Tibial artery (tissue), 4 donors: ENCODE measurements at regions of chr13 and their contacts with region 1.

Region 1: GRCh38 chr13:39616087-39616694 is 13.2 kb upstream of the LHFPL6 start:
- DNase-seq: peak in 1 of 2 donors; percentile 30
- H3K4me3 ChIP-seq: no peak overlapping the region
- H3K27ac ChIP-seq: no peak overlapping the region
- H3K4me1 ChIP-seq: no peaks in the 10 kb centered on the region
- H3K27me3 ChIP-seq: no peaks in the 10 kb centered on the region
- CTCF ChIP-seq: peak; percentile 80 to 94

Region 2: DNA sequence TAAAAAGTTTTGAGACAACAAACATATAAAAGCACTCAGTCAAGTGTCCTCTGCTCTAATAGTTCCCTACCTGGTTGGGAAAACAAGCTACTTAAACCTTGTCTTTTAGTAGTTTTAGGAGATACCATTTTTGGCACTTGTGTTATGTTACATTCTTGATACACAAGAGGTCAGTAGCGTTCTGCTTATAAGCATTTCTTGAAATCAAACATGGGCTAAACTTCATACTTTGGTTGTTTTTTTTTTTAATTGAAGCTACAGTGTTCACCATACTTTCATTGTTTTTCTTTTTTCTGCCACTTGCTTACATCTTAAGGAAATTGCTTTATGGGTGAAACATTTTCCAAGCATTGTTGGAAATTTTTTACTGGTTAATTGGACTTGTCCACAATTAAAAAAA is 565.0 kb before region 1 on chr13:
- intact Hi-C with region 1: loop called (anchors 5 kb)
- DNase-seq: no peak
- H3K4me3 ChIP-seq: no peak overlapping the region
- H3K27ac ChIP-seq: no peak overlapping the region
- H3K4me1 ChIP-seq: no peaks in the 10 kb centered on the region
- H3K27me3 ChIP-seq: no peaks in the 10 kb centered on the region
- CTCF ChIP-seq: peak; percentile 43 to 46

Region 3: DNA sequence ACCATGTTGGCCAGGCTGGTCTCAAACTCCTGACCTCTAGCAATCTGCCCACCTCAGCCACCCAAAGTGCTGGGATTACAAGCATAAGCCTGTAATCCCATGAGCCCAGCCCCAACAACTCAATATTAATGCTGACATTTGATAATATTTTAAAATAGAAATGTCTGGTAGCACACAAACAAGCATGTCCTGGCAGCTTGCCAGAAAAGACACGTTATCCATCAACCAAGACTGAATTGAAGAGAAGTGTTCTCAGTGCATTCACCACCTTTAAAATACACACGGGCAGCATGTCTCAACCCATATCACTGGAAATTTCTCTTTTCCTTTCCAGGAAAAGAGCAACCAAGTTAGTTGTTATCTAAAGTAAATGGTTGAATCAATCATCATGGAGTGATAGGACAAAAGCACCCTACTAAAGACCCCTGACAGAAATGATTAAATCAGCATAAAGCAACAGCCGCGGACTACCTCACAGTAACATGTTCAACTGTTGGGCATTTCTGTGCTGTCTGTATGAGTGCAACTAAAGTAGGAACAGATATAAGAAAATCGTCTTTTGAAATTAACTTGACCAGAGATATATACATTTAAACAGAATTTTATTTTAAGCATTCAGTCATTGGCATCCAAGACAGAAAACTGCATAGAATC is 38.2 kb before region 1 on chr13:
- intact Hi-C with region 1: no loop called
- DNase-seq: no peak
- H3K4me3 ChIP-seq: no peak overlapping the region
- H3K27ac ChIP-seq: peak overlapping the region in 1 of 2 donors; percentile 11
- H3K4me1 ChIP-seq: peaks cover 0 to 54% (median 13%) of the 10 kb centered on the region in 4 donors
- H3K27me3 ChIP-seq: no peaks in the 10 kb centered on the region
- CTCF ChIP-seq: no peak

Region 4: GRCh38 chr13:39688699-39689405 is 72.7 kb after region 1 on chr13:
- intact Hi-C with region 1: no loop called
- DNase-seq: no peak
- H3K4me3 ChIP-seq: no peak overlapping the region
- H3K27ac ChIP-seq: no peak overlapping the region
- H3K4me1 ChIP-seq: no peaks in the 10 kb centered on the region
- H3K27me3 ChIP-seq: no peaks in the 10 kb centered on the region
- CTCF ChIP-seq: no peak